ENCODE measurements at regions of chr20 and their contacts with region 1.

Region 1: GRCh38 chr20:433300-433975 is 25.3 kb downstream of the RBCK1 start:
- DNase-seq: peak; percentile 62
- H3K4me3 Mint-ChIP-seq: peak overlapping the region; percentile 66
- H3K27ac Mint-ChIP-seq: peak overlapping the region; percentile 98
- H3K4me1 Mint-ChIP-seq: peaks cover 79% of the 10 kb centered on the region
- H3K27me3 Mint-ChIP-seq: no peaks in the 10 kb centered on the region

Region 2: DNA sequence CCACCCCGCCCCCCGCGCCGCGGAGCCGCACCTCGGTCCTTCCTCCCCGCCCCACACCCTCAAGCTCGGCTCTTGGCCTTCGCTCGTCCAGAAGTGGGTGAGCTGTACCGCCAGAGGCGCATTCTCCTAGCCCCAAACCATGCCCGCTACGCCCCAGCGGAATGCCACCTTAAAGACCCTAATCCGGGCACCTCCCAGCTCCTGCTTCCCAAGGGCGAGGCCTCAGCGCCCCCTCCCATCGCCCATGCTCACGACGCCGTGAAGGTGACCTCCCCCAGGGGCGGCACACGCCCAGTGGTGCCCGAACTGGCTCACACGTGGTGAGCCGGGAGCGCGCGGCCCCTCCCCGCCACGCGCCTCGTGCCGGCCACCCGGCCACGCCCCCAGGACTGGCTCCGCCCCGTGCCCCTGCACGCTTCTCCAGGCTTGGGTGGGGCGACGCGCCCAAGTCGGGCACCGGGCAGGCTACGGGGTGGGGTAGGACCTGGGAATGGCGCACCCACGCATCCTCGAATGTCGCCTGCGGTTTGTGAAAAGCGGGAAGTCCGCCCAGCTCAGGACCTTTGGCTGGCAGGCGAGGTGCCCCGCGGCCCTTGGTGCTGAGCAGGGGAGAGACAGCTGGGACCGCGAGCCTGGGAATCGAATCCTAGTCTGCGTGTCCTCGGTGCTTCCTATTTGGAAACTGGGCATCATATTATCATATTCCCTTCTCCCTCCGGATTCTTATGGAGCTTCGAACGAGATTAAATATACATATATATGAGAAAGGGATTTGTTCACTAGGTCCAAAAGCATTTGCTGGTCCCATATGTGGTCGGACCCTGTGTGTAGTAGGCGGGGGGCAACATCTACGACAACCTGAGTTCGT is 109.0 kb before region 1 on chr20:
- intact Hi-C with region 1: loop called (anchors 1 kb)
- DNase-seq: peak; percentile 84
- H3K4me3 Mint-ChIP-seq: peak overlapping the region; percentile 91
- H3K27ac Mint-ChIP-seq: peak overlapping the region; percentile 84
- H3K4me1 Mint-ChIP-seq: peaks cover 25% of the 10 kb centered on the region
- H3K27me3 Mint-ChIP-seq: peaks cover 6% of the 10 kb centered on the region

Region 3: DNA sequence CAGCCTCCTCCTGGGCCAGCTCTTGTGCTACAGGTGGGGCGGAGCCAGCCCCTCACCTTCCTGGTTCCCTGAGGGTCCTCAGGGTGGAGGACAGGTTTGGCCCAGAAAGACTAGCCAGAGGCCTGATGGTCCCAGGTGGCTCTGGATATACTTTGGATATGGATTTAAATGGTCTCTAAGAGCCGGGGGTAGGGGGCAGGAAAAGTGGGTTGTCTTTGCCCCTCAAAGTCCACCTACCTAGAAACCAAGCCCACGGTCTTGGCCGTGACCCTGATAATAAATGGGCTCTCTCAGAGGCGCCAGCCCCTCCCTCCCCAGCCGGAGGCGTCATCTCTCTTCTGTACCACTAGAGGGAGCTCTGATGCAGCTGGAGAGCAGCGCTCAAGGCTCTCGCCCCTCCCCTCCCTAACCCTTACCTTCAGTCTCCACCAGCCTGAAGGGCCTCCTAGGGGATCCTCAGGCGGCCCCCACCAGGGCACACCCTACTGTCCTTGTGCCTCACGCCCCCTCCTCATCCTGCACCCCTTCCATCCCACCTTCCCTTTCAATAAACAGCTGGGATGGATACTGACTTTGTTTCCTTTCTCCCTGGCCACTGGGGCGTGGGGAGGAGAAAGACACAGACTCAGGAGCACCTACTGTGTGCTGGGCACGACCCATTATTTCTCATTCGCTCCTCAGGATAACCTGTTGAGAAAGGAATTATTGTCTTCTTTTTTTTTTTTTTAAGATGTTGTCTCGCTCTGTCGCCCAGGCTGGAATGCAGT is 79.0 kb before region 1 on chr20:
- intact Hi-C with region 1: loop called (anchors 1 kb)
- DNase-seq: peak; percentile 77
- H3K4me3 Mint-ChIP-seq: no peak overlapping the region
- H3K27ac Mint-ChIP-seq: no peak overlapping the region
- H3K4me1 Mint-ChIP-seq: peaks cover 18% of the 10 kb centered on the region
- H3K27me3 Mint-ChIP-seq: no peaks in the 10 kb centered on the region

Region 4: GRCh38 chr20:381581-382290 is 51.7 kb before region 1 on chr20:
- intact Hi-C with region 1: loop called (anchors 1 kb)
- DNase-seq: peak; percentile 75
- H3K4me3 Mint-ChIP-seq: peak overlapping the region; percentile 81
- H3K27ac Mint-ChIP-seq: peak overlapping the region; percentile 68
- H3K4me1 Mint-ChIP-seq: peaks cover 22% of the 10 kb centered on the region
- H3K27me3 Mint-ChIP-seq: peaks cover 3% of the 10 kb centered on the region

Region 5: GRCh38 chr20:407133-407952 is 26.1 kb before region 1 on chr20:
- intact Hi-C with region 1: loop called (anchors 1 kb)
- DNase-seq: peak; percentile 59
- H3K4me3 Mint-ChIP-seq: peak overlapping the region; percentile 86
- H3K27ac Mint-ChIP-seq: peak overlapping the region; percentile 95
- H3K4me1 Mint-ChIP-seq: peaks cover 47% of the 10 kb centered on the region
- H3K27me3 Mint-ChIP-seq: no peaks in the 10 kb centered on the region

Region 6: GRCh38 chr20:462199-462991 is 29.0 kb after region 1 on chr20 and contains the start of gene TBC1D20:
- intact Hi-C with region 1: loop called (anchors 1 kb)
- DNase-seq: peak; percentile 84
- H3K4me3 Mint-ChIP-seq: peak within 1 kb of the TSS; percentile 98
- H3K27ac Mint-ChIP-seq: peak within 1 kb of the TSS; percentile 94
- H3K4me1 Mint-ChIP-seq: peaks cover 44% of the 10 kb centered on the region
- H3K27me3 Mint-ChIP-seq: peaks cover 2% of the 10 kb centered on the region
- total RNA-seq, gene TBC1D20: 37.5 and 41.4 TPM in 2 replicates

Region 7: DNA sequence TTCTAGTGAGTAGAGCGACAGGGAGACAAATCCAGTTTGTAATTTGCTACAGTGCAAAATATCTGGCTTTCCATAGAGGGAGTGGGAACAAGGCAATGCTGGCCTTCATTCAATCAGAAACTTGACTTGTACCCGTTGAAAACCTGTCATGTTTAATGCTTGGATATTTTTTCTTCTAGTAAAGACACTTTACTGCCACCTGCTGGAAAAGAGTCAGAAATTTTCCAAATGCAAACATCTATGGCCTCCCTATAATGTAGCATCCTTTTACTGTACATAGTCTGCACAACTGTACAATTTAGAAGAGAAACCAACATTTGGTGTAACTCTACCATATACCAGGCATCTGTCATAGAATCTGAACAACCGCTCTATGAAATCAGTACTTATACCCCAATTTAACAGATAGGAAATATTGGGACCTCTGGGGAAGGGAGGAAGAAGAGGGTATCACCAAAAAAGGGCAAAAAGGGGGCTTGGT is 45.6 kb after region 1 on chr20:
- intact Hi-C with region 1: loop called (anchors 1 kb)
- DNase-seq: peak; percentile 25
- H3K4me3 Mint-ChIP-seq: no peak overlapping the region
- H3K27ac Mint-ChIP-seq: peak overlapping the region; percentile 69
- H3K4me1 Mint-ChIP-seq: peaks cover 33% of the 10 kb centered on the region
- H3K27me3 Mint-ChIP-seq: no peaks in the 10 kb centered on the region

Measured in activated T-helper 1 cell treated with anti-CD3 and anti-CD28 coated beads, Interleukin-12 subunit alpha, Interleukin-12 subunit beta, Interleukin-2, Interleukin-4 antibody, amounts not matched to agents 30 ng/mL and 10 ng/mL and 1 ng/mL, durations not matched to agents 14 hours and 24 hours and 36 hours (primary cell).